Activated naive CD4-positive, alpha-beta T cell treated with anti-CD3 and anti-CD28 coated beads for 36 hours (primary cell): ENCODE measurements at regions of chr10 and their contacts with region 1.

Region 1: DNA sequence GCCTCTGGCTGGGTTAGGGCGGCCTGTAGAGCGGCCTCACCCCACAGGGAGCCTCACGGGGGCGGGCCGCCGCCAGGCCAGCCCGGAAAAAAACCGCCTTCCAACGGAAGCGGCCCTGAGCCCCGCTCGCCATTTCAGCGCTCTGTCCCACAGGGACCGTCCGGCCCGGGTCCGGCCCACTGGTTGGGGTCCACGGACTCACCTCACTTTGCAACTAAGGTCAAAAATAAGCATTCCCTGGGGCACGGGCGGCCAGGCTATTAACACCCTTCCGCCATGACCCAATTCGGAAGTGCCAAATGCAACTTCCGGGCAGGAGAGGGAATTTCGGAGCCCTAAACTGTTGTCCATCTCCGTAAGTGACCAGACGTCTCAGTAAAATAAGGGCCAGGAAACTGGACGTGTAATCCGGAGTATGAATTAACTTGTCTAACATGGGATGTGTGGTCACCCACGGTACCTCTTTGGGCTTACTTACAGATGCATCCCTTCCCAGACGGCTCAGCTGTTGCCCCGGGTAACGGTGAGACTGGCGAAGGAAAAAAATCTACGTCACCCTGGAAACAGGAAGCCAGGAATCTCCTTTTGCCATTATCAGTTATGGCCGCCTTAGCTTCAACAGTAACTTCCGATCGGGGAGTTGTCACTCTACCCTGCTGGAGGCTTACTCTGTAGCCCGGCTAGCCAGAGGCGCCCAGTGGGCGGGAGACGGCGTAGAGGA is at the start of gene BBIP1:
- DNase-seq: no peak
- H3K4me3 Mint-ChIP-seq: peak within 1 kb of the TSS; percentile 97
- H3K27ac Mint-ChIP-seq: peak within 1 kb of the TSS; percentile 98
- H3K4me1 Mint-ChIP-seq: peaks cover 32% of the 10 kb centered on the region
- H3K27me3 Mint-ChIP-seq: no peaks in the 10 kb centered on the region
- total RNA-seq, gene BBIP1: 37.2 to 42.6 TPM

Region 2: GRCh38 chr10:110225756-110226542 is 692.9 kb before region 1 on chr10:
- CTCF ChIA-PET with region 1: no interaction called
- intact Hi-C with region 1: loop called (anchors 5 kb)
- DNase-seq: peak; percentile 93
- H3K4me3 Mint-ChIP-seq: peak overlapping the region; percentile 97
- H3K27ac Mint-ChIP-seq: peak overlapping the region; percentile 94
- H3K4me1 Mint-ChIP-seq: peaks cover 47% of the 10 kb centered on the region
- H3K27me3 Mint-ChIP-seq: no peaks in the 10 kb centered on the region

Region 3: GRCh38 chr10:110706690-110707098 is 212.1 kb before region 1 on chr10:
- CTCF ChIA-PET with region 1: no interaction called
- intact Hi-C with region 1: no loop called
- DNase-seq: no peak
- H3K4me3 Mint-ChIP-seq: no peak overlapping the region
- H3K27ac Mint-ChIP-seq: no peak overlapping the region
- H3K4me1 Mint-ChIP-seq: no peaks in the 10 kb centered on the region
- H3K27me3 Mint-ChIP-seq: no peaks in the 10 kb centered on the region

Region 4: DNA sequence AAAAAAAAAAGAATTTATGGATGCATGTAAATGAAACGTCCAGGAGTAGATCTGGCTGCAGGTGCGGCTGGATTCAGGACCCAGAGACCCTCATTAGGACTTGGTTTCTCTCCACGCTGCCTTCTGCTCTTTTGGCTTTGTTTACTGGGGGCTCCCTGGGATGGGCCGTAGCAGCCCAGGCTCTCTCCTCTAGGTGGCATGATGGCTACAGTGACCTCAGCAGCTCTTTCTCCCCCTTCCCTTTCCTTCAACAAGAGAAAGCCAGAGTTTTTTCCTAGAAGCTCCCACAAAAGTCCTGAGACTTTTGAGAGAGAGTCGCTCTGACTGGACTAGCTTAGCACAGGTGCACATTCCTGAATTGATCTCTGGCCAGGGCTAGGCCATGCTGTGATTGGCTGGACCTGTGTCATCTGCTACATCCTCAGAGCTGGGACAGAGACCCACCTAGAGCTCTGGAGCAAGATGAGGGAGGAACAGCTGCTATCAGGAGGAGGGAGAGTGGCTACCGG is 114.9 kb before region 1 on chr10:
- CTCF ChIA-PET with region 1: interaction called, 3 read pairs
- intact Hi-C with region 1: loop called (anchors 1 kb)
- DNase-seq: peak; percentile 59
- H3K4me3 Mint-ChIP-seq: no peak overlapping the region
- H3K27ac Mint-ChIP-seq: peak overlapping the region; percentile 47
- H3K4me1 Mint-ChIP-seq: peaks cover 34% of the 10 kb centered on the region
- H3K27me3 Mint-ChIP-seq: no peaks in the 10 kb centered on the region

Region 5: DNA sequence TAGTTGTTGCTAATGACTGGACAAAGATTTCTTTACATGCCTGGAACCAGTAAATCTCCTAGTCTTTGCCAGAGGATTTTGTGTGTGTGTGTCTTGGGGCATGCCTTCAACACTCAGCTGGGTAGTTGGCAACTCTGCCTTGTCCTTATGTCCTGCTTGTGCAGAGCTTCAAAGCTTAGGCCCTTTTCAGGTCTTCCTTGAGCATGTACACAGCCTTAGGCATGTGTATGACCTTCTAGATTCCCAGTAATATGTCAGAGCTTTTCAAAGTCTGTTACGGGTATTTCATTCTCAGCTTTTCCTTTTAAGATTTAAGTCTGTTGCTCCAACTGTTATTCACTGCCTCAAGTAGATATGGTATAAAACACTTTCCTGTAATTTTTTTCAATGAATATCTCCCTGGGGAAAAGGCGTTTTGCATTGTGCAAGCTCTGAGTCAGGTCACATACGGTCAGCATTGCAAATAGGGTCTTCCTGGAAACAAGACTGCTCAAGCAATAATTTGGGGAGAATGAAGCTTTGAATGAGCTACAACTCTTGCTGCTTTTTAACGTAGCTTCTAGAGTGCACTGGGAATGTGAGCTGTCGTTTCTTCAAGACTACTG is 26.1 kb after region 1 on chr10:
- CTCF ChIA-PET with region 1: no interaction called
- intact Hi-C with region 1: no loop called
- DNase-seq: no peak
- H3K4me3 Mint-ChIP-seq: no peak overlapping the region
- H3K27ac Mint-ChIP-seq: no peak overlapping the region
- H3K4me1 Mint-ChIP-seq: peaks cover 44% of the 10 kb centered on the region
- H3K27me3 Mint-ChIP-seq: no peaks in the 10 kb centered on the region

Region 6: GRCh38 chr10:110980807-110981206 is 62.0 kb after region 1 on chr10:
- CTCF ChIA-PET with region 1: no interaction called
- intact Hi-C with region 1: loop called (anchors 1 kb)
- DNase-seq: no peak
- H3K4me3 Mint-ChIP-seq: no peak overlapping the region
- H3K27ac Mint-ChIP-seq: no peak overlapping the region
- H3K4me1 Mint-ChIP-seq: peaks cover 47% of the 10 kb centered on the region
- H3K27me3 Mint-ChIP-seq: no peaks in the 10 kb centered on the region

Region 7: DNA sequence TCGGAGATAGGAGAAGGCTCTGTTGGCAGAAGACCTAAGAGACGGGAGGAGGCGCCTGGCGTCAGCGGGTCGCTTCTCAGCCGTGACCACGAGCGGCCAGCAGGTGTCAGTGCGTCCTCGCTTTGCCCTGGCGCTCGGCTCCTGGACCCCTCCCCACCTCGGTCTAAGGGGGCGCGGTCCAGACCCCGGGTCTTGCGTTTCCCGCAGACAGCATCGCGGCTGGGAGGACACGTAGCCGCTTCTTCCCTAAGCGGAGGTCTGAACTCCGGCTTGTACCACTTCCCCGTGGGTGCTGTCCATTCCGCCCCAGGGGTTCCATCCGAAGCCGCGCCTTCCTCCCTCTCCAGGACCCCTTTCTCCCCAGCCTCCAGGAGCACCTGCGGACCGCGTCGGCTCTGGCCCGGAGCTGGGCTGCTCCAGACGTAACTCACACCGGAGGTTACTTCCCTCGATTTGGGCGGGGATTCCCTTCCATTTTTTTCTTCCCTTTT is 157.4 kb after region 1 on chr10:
- CTCF ChIA-PET with region 1: interaction called, 3 read pairs
- intact Hi-C with region 1: loop called (anchors 2 kb)
- DNase-seq: peak; percentile 68
- H3K4me3 Mint-ChIP-seq: peak overlapping the region; percentile 71
- H3K27ac Mint-ChIP-seq: no peak overlapping the region
- H3K4me1 Mint-ChIP-seq: peaks cover 11% of the 10 kb centered on the region
- H3K27me3 Mint-ChIP-seq: peaks cover 55% of the 10 kb centered on the region

Region 8: DNA sequence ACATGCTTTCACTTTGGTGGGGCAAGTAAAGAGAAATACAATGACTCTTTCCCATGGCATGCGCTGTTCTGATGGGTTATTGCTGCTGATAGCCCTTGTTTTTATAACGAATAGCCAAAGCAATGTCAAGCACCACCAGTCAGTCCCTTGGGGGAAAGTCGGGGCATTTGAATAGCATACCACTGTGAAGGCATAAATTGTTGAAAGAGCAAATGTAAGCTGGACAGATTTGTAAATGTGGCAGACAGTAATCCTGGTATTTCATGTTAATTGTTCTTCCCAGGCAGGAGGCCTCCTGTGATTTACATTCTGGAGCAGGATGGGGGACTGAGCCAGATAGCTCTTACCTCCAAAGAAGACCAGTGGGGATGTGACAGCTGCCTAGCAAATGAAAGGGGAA is 451.3 kb after region 1 on chr10:
- CTCF ChIA-PET with region 1: no interaction called
- intact Hi-C with region 1: no loop called
- DNase-seq: no peak
- H3K4me3 Mint-ChIP-seq: no peak overlapping the region
- H3K27ac Mint-ChIP-seq: no peak overlapping the region
- H3K4me1 Mint-ChIP-seq: no peaks in the 10 kb centered on the region
- H3K27me3 Mint-ChIP-seq: peaks cover 8% of the 10 kb centered on the region

Region 9: GRCh38 chr10:112375721-112376395 is 1457.1 kb after region 1 on chr10:
- CTCF ChIA-PET with region 1: no interaction called
- intact Hi-C with region 1: loop called (anchors 2 kb)
- DNase-seq: peak; percentile 49
- H3K4me3 Mint-ChIP-seq: peak overlapping the region; percentile 97
- H3K27ac Mint-ChIP-seq: peak overlapping the region; percentile 99
- H3K4me1 Mint-ChIP-seq: peaks cover 55% of the 10 kb centered on the region
- H3K27me3 Mint-ChIP-seq: no peaks in the 10 kb centered on the region